ENCODE measurements at regions of chr17 and their contacts with region 1.

Region 1: DNA sequence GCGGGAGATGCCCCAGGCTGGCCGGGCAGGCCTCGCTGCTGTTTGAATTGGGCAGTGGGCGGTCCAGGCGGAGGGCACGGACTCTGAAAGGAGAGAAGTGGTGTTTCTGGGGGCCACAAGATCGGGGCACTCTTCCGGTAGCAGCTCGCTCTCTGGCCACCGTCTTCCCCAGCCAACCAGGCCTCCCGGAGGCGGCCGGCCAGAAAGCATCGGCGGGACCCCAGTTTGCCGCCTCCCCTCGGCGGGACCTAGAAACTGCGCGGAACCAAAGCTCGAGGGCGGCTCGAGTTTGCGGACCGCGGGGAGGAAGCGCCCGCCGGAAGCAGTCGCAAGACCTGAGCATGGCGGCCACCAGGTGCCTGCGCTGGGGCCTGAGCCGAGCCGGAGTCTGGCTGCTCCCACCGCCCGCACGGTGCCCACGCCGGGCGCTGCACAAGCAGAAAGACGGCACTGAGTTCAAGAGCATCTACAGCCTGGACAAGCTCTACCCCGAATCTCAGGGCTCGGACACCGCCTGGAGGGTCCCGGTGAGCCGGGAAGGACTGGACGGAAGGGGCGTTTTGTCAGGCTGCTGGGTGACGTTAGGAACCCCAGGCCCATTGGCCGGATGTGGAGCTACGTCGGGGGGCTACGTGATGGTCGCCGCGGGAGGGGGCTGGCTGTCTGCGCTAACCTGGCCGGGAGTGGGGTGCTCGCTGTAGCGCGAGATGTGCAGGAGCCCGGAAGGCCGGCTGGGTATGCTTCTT is at the start of gene MRPL58:
- DNase-seq: peak; percentile 80
- H3K4me3 Mint-ChIP-seq: peak within 1 kb of the TSS; percentile 96
- H3K27ac Mint-ChIP-seq: peak within 1 kb of the TSS; percentile 77
- H3K4me1 Mint-ChIP-seq: peaks cover 22% of the 10 kb centered on the region
- H3K27me3 Mint-ChIP-seq: no peaks in the 10 kb centered on the region
- CTCF ChIP-seq: peak; percentile 49
- total RNA-seq, gene MRPL58: 56.5 and 71.2 TPM in 2 replicates

Region 2: DNA sequence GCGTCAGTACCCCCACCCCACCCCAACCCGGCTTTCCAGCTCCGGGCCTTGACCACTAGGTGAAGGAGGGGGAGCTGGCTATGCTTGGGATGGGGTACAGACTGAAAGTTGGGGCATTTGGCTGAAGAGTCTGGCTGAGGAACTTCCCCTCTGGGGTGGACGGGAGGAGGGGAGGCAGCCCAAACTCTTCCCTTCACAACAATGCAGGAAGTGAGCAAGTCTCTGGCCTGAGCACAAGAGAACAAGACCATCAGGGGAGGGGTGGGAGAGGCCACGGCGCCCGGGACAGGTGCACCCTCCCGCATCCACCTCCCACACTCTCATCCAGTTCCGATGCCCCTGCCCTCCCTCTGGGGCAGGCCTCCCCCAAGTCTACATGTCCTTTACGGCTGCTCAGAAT is 95.1 kb before region 1 on chr17:
- CTCF ChIA-PET with region 1: no interaction called
- POLR2A ChIA-PET with region 1: no interaction called
- intact Hi-C with region 1: no loop called
- DNase-seq: no peak
- H3K4me3 Mint-ChIP-seq: no peak overlapping the region
- H3K27ac Mint-ChIP-seq: no peak overlapping the region
- H3K4me1 Mint-ChIP-seq: no peaks in the 10 kb centered on the region
- H3K27me3 Mint-ChIP-seq: peaks cover 8% of the 10 kb centered on the region
- CTCF ChIP-seq: no peak

Region 3: DNA sequence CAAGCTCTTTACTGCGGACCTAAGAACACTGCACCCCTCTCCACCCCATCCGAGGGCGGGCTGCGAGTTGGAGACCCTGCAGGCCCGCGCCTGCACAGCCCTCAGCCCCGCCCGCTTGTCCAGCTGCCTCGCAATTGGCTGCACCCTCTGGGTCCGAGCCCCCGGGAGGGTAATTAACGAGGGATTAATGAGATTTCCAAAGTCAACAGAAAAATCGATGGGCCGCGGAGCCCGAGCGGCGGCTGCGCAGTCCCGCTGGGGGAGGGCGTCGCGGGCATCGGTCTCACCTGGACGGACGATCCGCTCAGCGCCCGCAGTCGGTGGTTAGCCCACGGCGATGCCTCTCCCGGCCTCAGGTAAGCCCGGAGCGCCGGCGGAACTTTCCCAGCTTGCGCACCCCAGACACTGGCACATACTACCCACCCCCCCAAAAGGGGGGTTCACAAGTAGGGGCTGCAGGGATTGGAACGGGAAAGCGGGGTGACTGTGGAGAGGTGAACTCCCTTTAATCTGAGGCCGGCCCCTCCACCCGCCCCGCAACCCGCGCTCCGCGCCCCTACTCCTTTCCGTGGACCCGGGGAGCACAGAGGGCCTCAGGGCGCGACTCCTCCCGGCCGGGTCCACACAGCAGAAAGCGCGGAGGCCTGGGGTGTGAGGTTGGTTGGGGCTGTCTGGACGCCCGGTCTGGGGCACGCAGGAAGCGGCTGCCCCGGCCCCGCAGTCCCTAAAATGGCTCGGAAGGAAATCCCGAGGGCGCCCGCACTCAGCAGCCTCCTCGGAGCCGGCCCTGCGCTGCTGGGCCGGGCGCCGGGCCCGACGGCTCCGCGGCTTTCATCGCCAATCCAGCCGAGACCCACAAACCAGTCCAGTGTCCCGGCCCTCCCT is 76.7 kb before region 1 on chr17 and contains the start of gene OTOP3:
- CTCF ChIA-PET with region 1: no interaction called
- POLR2A ChIA-PET with region 1: no interaction called
- intact Hi-C with region 1: no loop called
- DNase-seq: no peak
- H3K4me3 Mint-ChIP-seq: no peak within 1 kb of the TSS
- H3K27ac Mint-ChIP-seq: no peak within 1 kb of the TSS
- H3K4me1 Mint-ChIP-seq: no peaks in the 10 kb centered on the region
- H3K27me3 Mint-ChIP-seq: peaks cover 21% of the 10 kb centered on the region
- CTCF ChIP-seq: no peak
- total RNA-seq, gene OTOP3: not detected in 2 replicates

Region 4: DNA sequence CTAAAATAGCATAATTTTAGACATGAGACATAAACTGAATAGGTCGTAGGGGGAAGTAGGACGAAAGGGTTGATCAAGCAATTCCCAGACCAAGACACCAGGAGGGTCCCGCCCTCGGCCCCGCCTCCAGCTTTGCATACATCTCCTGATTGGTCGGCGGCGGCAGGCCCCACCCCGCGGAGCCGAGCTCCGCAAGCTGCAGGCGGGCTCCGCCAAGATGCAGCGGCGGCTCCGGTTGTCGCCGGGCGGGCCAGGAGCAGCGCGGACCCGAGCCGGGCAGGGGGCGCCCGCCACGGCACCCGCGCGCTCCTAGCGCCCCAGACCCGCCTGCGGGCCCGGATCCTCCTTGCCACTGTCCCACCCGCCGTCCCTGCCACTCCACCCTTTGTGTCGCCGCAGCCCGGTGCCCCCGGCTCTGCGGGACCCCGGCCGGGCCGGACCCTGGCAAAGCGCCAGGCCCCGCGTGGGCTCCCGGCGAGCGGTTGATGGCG is 25.1 kb before region 1 on chr17 and contains the start of gene CDR2L:
- CTCF ChIA-PET with region 1: interaction called, 29 read pairs
- POLR2A ChIA-PET with region 1: interaction called, 228 read pairs
- intact Hi-C with region 1: no loop called
- DNase-seq: peak; percentile 90
- H3K4me3 Mint-ChIP-seq: peak within 1 kb of the TSS; percentile 78
- H3K27ac Mint-ChIP-seq: peak within 1 kb of the TSS; percentile 16
- H3K4me1 Mint-ChIP-seq: peaks cover 14% of the 10 kb centered on the region
- H3K27me3 Mint-ChIP-seq: no peaks in the 10 kb centered on the region
- CTCF ChIP-seq: no peak
- total RNA-seq, gene CDR2L: 3.4 and 4.1 TPM in 2 replicates

Region 5: GRCh38 chr17:74994476-74994875 is 18.0 kb before region 1 on chr17:
- CTCF ChIA-PET with region 1: interaction called, 29 read pairs
- POLR2A ChIA-PET with region 1: interaction called, 228 read pairs
- intact Hi-C with region 1: no loop called
- DNase-seq: peak; percentile 43
- H3K4me3 Mint-ChIP-seq: no peak overlapping the region
- H3K27ac Mint-ChIP-seq: no peak overlapping the region
- H3K4me1 Mint-ChIP-seq: peaks cover 25% of the 10 kb centered on the region
- H3K27me3 Mint-ChIP-seq: no peaks in the 10 kb centered on the region
- CTCF ChIP-seq: no peak

Region 6: DNA sequence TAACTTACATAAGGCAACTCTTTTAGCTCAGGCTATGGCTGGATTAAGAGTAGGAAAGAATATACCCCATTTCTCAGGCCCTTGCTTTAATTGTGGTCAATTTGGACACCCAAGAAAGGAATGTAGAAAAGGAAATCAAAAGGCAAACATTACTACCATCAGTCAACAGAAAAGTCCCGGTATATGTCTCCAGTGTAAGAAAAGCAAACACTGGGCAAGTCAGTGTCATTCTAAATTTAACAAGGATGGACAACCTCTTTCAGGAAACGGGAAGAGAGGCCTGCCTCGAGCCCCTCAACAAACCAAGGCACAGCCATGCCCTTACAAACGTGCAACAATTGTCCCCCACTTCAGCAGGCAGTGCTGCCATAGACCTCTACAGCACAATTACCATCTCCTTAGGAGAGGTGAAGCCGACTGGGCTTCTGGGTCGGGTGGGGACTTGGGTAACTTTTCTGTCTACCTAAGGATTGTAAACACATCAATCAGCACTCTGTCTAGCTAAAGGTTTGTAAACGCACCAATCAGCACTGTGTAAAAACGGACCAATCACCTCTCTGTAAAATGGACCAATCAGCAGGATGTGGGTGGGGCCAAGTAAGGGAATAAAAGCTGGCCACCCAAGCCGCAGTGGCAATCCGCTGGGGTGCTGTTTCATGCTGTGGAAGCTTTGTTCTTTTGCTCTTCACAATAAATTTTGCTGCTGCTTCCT is 12.3 kb after region 1 on chr17:
- CTCF ChIA-PET with region 1: interaction called, 11 read pairs
- POLR2A ChIA-PET with region 1: interaction called, 31 read pairs
- intact Hi-C with region 1: no loop called
- DNase-seq: no peak
- H3K4me3 Mint-ChIP-seq: no peak overlapping the region
- H3K27ac Mint-ChIP-seq: no peak overlapping the region
- H3K4me1 Mint-ChIP-seq: peaks cover 15% of the 10 kb centered on the region
- H3K27me3 Mint-ChIP-seq: no peaks in the 10 kb centered on the region
- CTCF ChIP-seq: no peak

Region 7: GRCh38 chr17:75034236-75034908 is 21.9 kb after region 1 on chr17:
- CTCF ChIA-PET with region 1: interaction called, 4 read pairs
- POLR2A ChIA-PET with region 1: interaction called, 45 read pairs
- intact Hi-C with region 1: loop called (anchors 1 kb)
- DNase-seq: peak; percentile 96
- H3K4me3 Mint-ChIP-seq: peak overlapping the region; percentile 81
- H3K27ac Mint-ChIP-seq: peak overlapping the region; percentile 94
- H3K4me1 Mint-ChIP-seq: peaks cover 12% of the 10 kb centered on the region
- H3K27me3 Mint-ChIP-seq: no peaks in the 10 kb centered on the region
- CTCF ChIP-seq: no peak